Astrocyte of the cerebellum (primary cell): ENCODE measurements at regions of chr17 and their contacts with region 1.

Region 1: DNA sequence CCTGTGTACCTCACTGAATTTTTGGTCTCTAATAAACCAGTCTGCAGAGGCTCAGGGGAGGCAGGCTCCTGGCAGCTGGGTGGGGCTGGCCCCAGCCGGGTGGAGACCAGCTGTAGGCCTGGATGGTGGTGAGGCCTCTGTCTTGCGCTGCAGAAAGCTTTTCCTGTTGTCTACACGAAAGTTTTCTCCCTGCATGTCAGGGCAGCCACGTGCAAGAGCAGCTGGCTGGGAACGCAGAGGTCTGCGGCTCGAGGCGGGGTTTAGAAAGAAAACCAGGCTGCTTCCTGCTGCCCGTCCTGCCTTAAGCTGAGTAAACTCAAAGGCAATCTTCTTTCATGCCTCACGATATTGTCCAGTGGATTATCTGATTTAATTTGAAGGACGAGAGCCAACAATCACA is 2.4 kb downstream of the SERPINF1 start:
- DNase-seq: no peak
- H3K4me3 ChIP-seq: peak overlapping the region; percentile 15
- CTCF ChIP-seq: no peak

Region 2: GRCh38 chr17:1422907-1423306 is 341.4 kb before region 1 on chr17:
- in situ Hi-C with region 1: no loop called
- DNase-seq: peak; percentile 95
- H3K4me3 ChIP-seq: no peak overlapping the region
- CTCF ChIP-seq: no peak

Region 3: DNA sequence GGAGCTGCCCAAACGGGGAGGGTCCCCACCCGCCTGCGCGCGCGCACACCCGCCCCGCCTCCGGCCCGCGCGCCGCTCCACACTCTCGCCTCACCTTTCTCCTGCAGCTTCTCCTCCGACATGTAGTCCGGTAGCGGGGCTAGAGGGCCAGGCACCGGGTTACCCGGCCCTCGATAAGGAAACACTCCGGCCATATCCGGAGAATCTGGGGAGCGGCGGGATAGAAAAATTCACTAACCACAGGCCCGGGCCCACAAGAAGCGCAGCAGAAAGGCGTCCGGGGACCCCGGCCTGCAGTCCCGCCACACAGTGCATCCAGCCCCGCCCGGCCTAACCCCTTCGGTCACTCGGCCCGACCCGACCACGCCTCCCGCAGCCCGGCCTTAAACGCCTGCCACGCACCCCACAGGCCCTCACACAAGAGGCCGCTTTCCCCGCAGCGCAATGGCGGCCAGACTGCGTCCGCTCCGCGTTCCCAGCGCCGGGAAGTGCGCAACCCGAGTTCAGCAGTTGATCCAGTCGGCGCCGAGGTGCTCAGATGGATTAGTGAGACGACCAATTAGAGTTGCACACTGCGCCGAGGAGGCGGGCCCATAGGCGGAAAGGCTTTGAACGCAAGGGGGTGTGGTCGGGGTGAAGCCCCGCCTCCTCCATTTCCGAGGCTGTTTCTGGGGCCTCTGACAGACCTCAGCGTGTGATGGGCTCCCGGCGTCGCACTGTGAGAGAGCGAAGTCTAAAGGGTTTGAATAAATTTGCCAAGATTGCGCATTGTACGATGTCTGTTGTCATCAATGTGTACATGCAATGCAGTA is 79.7 kb before region 1 on chr17 and contains the start of gene PRPF8:
- in situ Hi-C with region 1: no loop called
- DNase-seq: peak; percentile 95
- H3K4me3 ChIP-seq: peak within 1 kb of the TSS; percentile 87
- CTCF ChIP-seq: no peak

Region 4: GRCh38 chr17:1703063-1703462 is 61.2 kb before region 1 on chr17:
- in situ Hi-C with region 1: no loop called
- DNase-seq: no peak
- H3K4me3 ChIP-seq: no peak overlapping the region
- CTCF ChIP-seq: no peak

Region 5: GRCh38 chr17:1716076-1716995 is 47.9 kb before region 1 on chr17:
- in situ Hi-C with region 1: loop called (anchors 10 kb)
- DNase-seq: peak; percentile 100
- H3K4me3 ChIP-seq: peak overlapping the region; percentile 84
- CTCF ChIP-seq: peak; percentile 6